ENCODE measurements at regions of chr15 and their contacts with region 1.

Region 1: DNA sequence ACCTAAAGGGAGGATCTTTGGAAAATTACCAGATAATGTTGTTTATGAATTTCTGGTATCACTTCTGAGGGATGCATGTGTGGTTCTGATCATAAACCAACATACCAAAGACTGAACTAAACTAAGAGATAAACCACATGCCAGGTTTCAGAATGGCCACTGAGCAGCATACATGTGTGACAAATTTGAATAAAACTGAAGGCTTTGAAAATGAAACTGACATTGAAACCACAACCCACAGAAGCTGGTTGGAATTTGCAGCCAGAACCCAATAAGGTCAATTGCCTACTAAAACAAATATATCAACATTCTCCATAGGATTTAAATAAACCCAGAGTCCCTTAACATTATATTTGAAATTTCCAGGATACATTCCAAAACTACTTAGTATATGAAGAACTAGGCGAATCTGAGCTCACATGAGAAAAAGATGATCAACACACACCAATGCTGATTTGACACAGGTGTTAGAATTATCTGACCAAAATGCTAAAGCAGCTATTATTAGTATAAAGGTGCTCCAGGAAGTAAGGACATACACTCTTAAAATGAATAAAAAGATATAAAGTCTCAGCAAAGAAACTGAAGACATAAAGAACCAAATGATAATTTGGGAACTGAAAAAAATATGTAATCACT is 125.0 kb downstream of the ZNF280D start:
- DNase-seq: peak; percentile 87
- H3K4me3 ChIP-seq: peak overlapping the region; percentile 62
- H3K27ac ChIP-seq: peak overlapping the region; percentile 98
- H3K4me1 ChIP-seq: peaks cover 66% of the 10 kb centered on the region
- CTCF ChIP-seq: no peak

Region 2: GRCh38 chr15:56245871-56246814 is 362.1 kb before region 1 on chr15:
- CTCF ChIA-PET with region 1: no interaction called
- POLR2A ChIA-PET with region 1: no interaction called
- intact Hi-C with region 1: loop called (anchors 5 kb)
- DNase-seq: peak; percentile 96
- H3K4me3 ChIP-seq: peak overlapping the region; percentile 88
- H3K27ac ChIP-seq: peak overlapping the region; percentile 76
- H3K4me1 ChIP-seq: peaks cover 26% of the 10 kb centered on the region
- CTCF ChIP-seq: peak; percentile 100

Region 3: GRCh38 chr15:56365075-56365711 is 243.1 kb before region 1 on chr15 and contains the start of gene TEX9:
- CTCF ChIA-PET with region 1: no interaction called
- POLR2A ChIA-PET with region 1: no interaction called
- intact Hi-C with region 1: loop called (anchors 10 kb)
- DNase-seq: peak; percentile 93
- H3K4me3 ChIP-seq: peak within 1 kb of the TSS; percentile 88
- H3K27ac ChIP-seq: peak within 1 kb of the TSS; percentile 93
- H3K4me1 ChIP-seq: peaks cover 18% of the 10 kb centered on the region
- CTCF ChIP-seq: no peak
- total RNA-seq, gene TEX9: 16.9 and 20.0 TPM in 2 replicates

Region 4: GRCh38 chr15:56496635-56497034 is 111.6 kb before region 1 on chr15:
- CTCF ChIA-PET with region 1: no interaction called
- POLR2A ChIA-PET with region 1: no interaction called
- intact Hi-C with region 1: loop called (anchors 5 kb)
- DNase-seq: peak; percentile 88
- H3K4me3 ChIP-seq: no peak overlapping the region
- H3K27ac ChIP-seq: no peak overlapping the region
- H3K4me1 ChIP-seq: peaks cover 8% of the 10 kb centered on the region
- CTCF ChIP-seq: peak; percentile 98

Region 5: DNA sequence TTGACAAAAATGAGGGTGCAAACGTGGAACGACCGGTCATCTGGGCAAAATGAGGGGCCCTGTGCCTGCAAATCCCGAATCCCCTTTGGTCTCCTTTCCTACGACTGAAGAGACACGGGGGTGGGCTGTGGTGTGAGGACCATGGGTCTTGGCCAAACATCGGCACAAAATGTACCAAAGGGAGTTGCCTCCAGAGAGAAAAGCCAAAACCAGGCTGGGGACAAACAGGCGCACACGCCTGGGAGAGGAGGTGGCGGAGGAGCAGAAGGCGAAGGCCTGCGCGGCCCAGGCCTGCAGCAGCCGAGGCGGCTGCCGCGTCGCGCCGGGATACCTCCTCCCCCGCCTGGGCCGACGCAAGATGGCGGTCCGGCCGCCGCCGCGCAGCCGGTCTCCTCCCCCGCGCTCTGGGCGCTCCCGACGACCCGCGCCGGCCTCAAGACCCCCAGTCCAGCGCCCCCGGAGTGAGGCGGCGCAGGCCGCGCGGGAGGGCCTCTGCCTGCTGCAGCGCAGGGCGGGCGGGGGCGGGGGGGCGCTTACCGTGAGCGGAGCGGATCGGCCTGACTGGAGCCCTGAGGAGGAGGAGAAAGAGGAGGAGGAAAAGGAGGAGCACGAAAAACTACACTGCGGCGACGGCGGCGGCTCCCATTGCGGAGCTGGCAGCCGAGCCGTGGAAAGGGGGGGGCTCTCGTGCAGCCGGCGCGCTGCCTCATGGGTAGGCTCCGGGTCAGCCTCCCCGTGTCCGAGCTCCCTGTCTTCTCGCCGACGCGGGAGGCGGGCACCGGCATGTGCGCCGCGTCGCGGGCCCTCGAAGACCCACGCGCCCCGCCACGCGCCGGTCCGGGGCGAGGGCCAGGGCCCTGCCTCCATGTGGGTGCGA is 124.9 kb after region 1 on chr15 and contains the start of gene ZNF280D:
- CTCF ChIA-PET with region 1: no interaction called
- POLR2A ChIA-PET with region 1: interaction called, 4 read pairs
- intact Hi-C with region 1: loop called (anchors 2 kb)
- DNase-seq: peak; percentile 73
- H3K4me3 ChIP-seq: peak within 1 kb of the TSS; percentile 74
- H3K27ac ChIP-seq: peak within 1 kb of the TSS; percentile 60
- H3K4me1 ChIP-seq: peaks cover 26% of the 10 kb centered on the region
- CTCF ChIP-seq: no peak
- total RNA-seq, gene ZNF280D: 7.1 and 10.7 TPM in 2 replicates

Region 6: DNA sequence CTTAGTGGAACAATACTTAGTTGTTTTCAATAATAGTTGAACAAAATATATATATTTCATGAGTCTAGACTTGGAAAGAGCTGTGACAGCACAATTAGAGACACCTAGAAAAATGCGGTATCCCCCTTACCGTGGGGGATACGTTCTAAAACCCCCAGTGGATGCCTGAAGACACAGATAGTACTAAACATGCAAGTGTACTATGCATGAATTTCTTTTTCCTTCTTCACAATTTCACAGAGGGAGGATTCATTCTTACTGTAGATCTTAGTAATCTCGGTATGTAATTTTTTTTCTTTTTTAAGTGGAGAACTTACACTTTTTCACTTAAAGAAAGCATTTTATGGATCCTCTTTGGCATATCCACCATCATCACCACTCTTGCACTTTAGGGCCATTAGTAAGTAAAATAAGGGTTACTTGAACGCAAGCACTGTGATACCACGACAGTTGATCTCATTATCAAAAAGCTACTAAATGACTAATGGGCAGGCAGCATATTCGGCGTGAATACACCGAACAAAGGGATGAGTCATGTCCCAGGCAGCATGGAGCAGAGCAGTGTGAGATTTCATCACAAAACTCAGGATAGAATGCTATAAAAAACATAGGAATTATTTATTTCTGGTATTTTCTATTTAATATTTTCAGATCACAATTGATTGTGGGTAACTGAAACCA is 197.3 kb after region 1 on chr15:
- CTCF ChIA-PET with region 1: no interaction called
- POLR2A ChIA-PET with region 1: no interaction called
- intact Hi-C with region 1: no loop called
- DNase-seq: no peak
- H3K4me3 ChIP-seq: peak overlapping the region; percentile 51
- H3K27ac ChIP-seq: no peak overlapping the region
- H3K4me1 ChIP-seq: peaks cover 22% of the 10 kb centered on the region
- CTCF ChIP-seq: no peak